ENCODE measurements at regions of chr5 and their contacts with region 1.

Region 1: GRCh38 chr5:79621042-79621441 is 8.8 kb downstream of the TENT2 start:
- DNase-seq: peak; percentile 52
- ATAC-seq: no peak
- H3K4me3 ChIP-seq: no peak overlapping the region
- H3K27ac ChIP-seq: no peak overlapping the region
- H3K4me1 ChIP-seq: no peaks in the 10 kb centered on the region
- H3K27me3 ChIP-seq: no peaks in the 10 kb centered on the region
- CTCF ChIP-seq: no peak

Region 2: DNA sequence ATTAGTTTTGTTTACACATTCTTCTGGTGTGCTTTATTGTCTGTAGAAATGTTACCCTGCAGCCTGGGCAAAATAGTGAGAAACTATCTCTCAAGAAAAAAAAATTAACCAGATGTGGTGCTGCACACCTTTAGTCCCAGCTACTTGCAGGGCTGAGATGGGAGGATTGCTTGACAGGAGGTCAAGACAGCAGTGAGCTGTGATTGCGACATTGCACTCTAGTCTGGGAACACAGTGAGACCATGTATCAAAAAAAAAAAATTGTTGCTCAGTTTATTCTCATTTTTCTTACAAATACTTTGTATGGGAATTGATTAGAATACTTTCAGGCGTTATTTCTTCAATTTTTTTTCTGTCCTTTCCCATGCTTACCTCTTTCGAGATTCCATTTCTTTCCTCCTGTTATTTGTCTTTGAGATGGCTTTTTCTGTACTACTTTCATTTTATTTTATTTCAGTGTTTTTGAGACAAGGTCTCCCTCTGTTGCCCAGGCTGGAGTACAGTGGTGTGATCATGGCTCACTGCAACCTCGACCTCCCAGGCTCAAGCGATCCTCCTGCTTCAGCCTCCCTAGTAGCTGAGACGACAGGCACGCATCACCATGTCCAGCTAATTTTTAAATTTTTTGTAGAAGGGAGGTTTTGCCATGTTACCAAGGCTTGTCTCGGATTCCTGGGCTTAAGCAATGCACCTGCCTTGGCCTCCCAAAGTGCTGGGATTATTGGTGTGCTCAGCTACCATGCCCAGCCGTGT is 16.1 kb after region 1 on chr5:
- CTCF ChIA-PET with region 1: no interaction called
- POLR2A ChIA-PET with region 1: interaction called, 12 read pairs
- in situ Hi-C with region 1: no loop called
- intact Hi-C with region 1: no loop called
- DNase-seq: no peak
- ATAC-seq: no peak
- H3K4me3 ChIP-seq: no peak overlapping the region
- H3K27ac ChIP-seq: no peak overlapping the region
- H3K4me1 ChIP-seq: no peaks in the 10 kb centered on the region
- H3K27me3 ChIP-seq: no peaks in the 10 kb centered on the region
- CTCF ChIP-seq: no peak

Region 3: DNA sequence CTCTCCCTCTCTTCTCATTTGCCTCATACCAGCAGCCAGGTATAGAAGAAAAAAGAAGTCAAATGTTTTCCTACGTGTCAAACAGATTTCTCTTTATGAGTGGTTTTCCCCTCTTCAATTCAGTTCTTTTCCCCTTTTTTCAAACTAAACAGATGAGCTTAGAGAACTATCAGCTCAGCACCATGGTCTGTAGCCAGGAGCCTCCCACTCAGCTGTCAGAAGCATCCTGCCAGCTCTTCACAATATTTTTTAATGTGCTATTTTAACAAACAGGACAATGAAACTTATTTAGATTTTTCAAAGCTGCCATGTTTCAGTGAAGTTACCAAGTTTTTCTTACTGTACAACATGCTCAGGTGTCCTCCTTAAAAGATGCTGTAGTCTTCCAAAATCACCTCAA is 132.1 kb after region 1 on chr5:
- CTCF ChIA-PET with region 1: interaction called, 10 read pairs
- POLR2A ChIA-PET with region 1: no interaction called
- in situ Hi-C with region 1: no loop called
- intact Hi-C with region 1: no loop called
- DNase-seq: no peak
- ATAC-seq: no peak
- H3K4me3 ChIP-seq: no peak overlapping the region
- H3K27ac ChIP-seq: no peak overlapping the region
- H3K4me1 ChIP-seq: no peaks in the 10 kb centered on the region
- H3K27me3 ChIP-seq: peaks cover 9% of the 10 kb centered on the region; the same call in 1 of the 2 replicates
- CTCF ChIP-seq: no peak

Measured in Panc1 (cell line).